ENCODE measurements at regions of chr1 and their contacts with region 1.

Region 1: DNA sequence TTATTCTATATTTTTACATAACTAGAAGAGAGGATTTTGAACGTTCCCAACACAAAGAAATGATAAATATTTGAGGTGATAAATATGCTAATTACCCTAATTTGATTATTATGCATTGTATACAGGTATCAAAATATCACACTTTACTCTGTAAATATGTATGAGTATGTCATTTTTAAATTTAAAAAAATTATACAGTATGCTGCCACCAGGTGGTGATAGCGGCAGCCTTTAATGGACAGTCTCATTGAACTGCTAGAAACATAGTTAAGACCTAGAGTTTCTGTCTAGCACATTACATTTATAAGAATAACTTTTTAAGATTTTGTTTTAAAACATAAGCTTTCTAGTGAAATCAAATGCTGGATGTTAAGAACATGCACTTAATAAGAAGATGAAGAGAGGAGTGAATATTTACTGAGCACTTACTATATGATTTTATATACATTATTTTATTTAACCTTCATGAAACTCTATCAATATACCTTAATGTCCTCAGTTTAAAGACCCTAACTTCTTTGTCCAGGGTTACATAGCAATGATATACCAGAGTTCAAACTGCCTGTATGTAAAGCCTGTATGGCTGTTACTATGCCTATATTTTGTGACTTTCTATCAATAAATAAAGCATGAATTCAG is 207.1 kb downstream of the NUF2 start:
- DNase-seq: peak; percentile 13
- ATAC-seq: peak; percentile 68
- H3K4me3 ChIP-seq: no peak overlapping the region
- H3K27ac ChIP-seq: no peak overlapping the region
- H3K4me1 ChIP-seq: no peaks in the 10 kb centered on the region
- H3K27me3 ChIP-seq: no peaks in the 10 kb centered on the region
- CTCF ChIP-seq: peak; percentile 29 to 56 (median 56); a peak in 5 of 6 replicates
- POLR2A ChIP-seq: no peak
- RAD21 ChIP-seq: peak; percentile 47

Region 2: GRCh38 chr1:162878000-162878596 is 650.7 kb before region 1 on chr1:
- CTCF ChIA-PET with region 1: no interaction called
- POLR2A ChIA-PET with region 1: no interaction called
- RAD21 ChIA-PET with region 1: no interaction called
- intact Hi-C with region 1: loop called (anchors 10 kb)
- DNase-seq: peak; percentile 68
- ATAC-seq: peak; percentile 93
- H3K4me3 ChIP-seq: no peak overlapping the region
- H3K27ac ChIP-seq: no peak overlapping the region
- H3K4me1 ChIP-seq: no peaks in the 10 kb centered on the region
- H3K27me3 ChIP-seq: no peaks in the 10 kb centered on the region
- CTCF ChIP-seq: peak; percentile 81 to 88 (median 85)
- POLR2A ChIP-seq: no peak
- RAD21 ChIP-seq: peak; percentile 96

Region 3: DNA sequence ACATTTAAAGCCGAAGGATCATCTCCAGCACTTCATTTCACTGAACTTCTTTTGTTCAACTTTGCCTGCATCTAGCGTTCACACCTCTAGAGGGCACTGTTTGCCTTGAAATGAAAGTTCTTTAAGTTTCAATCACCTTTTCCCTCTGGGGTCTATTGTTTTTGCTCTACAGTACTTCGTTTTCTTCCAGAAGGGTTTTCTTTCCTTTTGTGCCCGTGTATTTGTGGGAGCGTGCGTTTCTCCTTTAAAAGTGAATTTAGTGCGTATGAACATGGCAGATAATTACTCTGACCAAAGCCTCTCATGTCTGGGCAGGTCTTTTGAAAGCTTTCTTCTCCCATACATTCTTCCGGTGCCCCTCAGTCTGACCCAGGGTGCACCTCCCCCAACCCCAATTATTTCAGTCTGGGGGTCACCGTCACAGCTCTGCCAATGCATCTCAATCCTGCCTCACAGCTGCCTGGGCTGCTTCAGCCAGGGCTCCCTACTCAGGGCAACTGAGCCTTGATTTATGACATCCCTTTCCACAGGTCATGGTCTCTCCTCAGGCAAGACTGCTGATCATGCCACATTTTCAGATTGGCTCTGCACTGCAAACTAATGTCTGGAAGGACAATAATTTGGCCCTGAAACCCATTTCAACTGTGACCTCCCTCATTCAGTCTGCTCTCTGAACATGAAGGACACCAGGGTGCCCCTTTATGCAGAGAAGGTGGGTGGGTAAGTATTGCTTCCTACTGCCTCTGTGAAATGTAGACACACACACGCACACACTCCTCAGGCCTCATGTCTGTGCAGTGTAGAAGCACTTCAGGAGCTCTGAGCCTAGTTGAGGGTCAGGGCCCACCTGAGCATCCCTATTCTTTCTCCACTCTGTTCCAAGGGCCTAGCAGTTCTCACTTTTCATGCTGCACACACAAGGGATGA is 118.5 kb before region 1 on chr1:
- CTCF ChIA-PET with region 1: no interaction called
- POLR2A ChIA-PET with region 1: no interaction called
- RAD21 ChIA-PET with region 1: no interaction called
- intact Hi-C with region 1: loop called (anchors 1 kb)
- DNase-seq: peak; percentile 48
- ATAC-seq: peak; percentile 34
- H3K4me3 ChIP-seq: no peak overlapping the region
- H3K27ac ChIP-seq: no peak overlapping the region
- H3K4me1 ChIP-seq: no peaks in the 10 kb centered on the region
- H3K27me3 ChIP-seq: peaks cover 4% of the 10 kb centered on the region; the same call in 1 of the 2 replicates
- CTCF ChIP-seq: peak; percentile 49 to 89 (median 73); a peak in 5 of 6 replicates
- POLR2A ChIP-seq: no peak
- RAD21 ChIP-seq: peak; percentile 78

Region 4: DNA sequence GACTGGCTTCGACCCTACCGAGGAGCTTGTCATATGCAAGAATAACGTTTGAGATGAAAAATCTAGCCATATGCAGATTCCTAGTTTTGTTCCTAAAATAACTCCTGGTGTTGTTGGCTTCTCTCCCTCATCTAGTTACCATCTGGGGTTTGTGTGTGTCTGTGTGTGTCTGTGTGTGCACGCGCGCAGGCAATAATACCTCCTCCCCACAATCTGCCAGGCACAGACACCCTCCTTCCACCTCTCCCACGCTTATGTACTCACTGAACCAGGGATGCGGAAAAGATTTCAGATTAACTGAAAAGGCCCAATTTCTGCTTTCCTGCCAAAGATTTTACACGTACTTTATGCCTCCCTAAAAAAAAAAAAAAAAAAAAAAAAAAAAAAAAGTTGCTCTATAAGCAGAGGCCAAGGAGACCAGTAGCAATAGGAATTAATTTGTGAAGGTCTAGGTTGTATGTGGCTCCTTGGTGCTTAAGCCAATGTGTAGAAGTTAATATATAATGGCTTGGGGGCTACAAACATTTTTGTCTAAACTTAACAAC is 245.6 kb after region 1 on chr1:
- CTCF ChIA-PET with region 1: no interaction called
- POLR2A ChIA-PET with region 1: no interaction called
- RAD21 ChIA-PET with region 1: no interaction called
- intact Hi-C with region 1: no loop called
- DNase-seq: no peak
- ATAC-seq: no peak
- H3K4me3 ChIP-seq: no peak overlapping the region
- H3K27ac ChIP-seq: no peak overlapping the region
- H3K4me1 ChIP-seq: no peaks in the 10 kb centered on the region
- H3K27me3 ChIP-seq: no peaks in the 10 kb centered on the region
- CTCF ChIP-seq: no peak
- POLR2A ChIP-seq: no peak
- RAD21 ChIP-seq: no peak

Measured in HCT116 (cell line).